ENCODE measurements at regions of chr4 and their contacts with region 1.

Region 1: DNA sequence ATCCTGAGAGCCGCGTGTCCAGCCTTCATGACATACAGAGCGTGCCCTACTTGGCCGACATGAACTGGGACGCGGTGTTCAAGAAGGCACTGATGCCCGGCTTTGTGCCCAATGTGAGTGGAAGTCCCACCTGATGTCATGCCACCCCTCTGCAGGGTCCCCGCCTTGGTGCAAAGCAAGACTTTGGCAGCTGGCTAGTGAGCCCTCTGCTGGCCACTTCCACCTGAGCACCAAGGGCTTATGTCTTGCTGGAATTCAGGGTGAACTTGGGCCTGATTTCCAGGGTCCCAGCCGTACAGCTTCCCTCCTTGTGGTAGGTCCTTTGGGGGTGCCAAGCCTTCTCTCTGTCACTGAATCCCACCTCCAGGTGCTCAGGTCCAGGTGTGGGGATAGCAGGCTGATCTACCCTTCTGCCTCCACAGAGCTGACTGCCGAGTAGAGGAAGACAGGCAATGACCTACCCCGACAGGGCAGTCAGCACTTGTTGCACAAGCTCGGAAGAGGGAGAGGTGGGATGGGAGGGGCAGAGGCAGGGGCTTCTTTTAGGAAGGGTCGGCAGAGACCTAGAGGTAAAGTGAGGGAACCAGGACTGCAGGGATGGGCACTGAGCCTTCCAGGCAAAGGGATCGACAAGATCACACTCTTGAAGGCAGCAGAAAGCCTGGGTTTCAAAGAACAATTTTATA is 248.1 kb downstream of the EVC2 start:
- DNase-seq: peak; percentile 38 to 43
- ATAC-seq: peak; percentile 67 to 89; a peak in 5 of 6 replicates
- H3K4me3 ChIP-seq: no peak overlapping the region
- H3K27ac ChIP-seq: 0 out of 6 replicates have a peak overlapping the region, but pooled peaks of 1 of the 2 experiments have one; percentile 21
- H3K4me1 ChIP-seq: no peaks in the 10 kb centered on the region
- CTCF ChIP-seq: peak; percentile 59
- EP300 ChIP-seq: no peak
- POLR2A ChIP-seq: no peak
- RAD21 ChIP-seq: peak; percentile 62 to 69

Region 2: GRCh38 chr4:5079581-5079980 is 380.7 kb before region 1 on chr4:
- CTCF ChIA-PET with region 1: no interaction called
- POLR2A ChIA-PET with region 1: no interaction called
- DNase-seq: no peak
- ATAC-seq: no peak
- H3K4me3 ChIP-seq: no peak overlapping the region
- H3K27ac ChIP-seq: no peak overlapping the region
- H3K4me1 ChIP-seq: no peaks in the 10 kb centered on the region
- CTCF ChIP-seq: no peak
- EP300 ChIP-seq: no peak
- POLR2A ChIP-seq: no peak
- RAD21 ChIP-seq: no peak

Region 3: DNA sequence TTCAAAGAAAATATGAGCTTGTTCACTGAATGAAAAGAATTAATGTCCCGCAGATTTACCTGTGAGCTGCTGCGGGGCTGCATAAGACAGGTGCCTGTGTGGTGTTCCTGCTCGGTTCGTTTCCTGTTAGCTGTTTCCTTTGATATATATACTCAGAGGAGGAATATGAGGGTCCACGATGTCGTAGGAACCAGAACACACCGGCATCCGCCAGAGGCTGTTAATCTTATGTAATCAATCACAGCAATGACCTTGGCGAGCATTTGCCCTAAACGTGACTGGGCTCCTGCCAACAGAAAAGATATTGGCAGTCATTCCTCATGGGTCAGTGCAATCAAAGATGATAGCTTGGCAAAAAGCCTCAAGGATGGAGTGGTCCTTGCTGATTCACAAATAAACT is 12.0 kb before region 1 on chr4:
- CTCF ChIA-PET with region 1: interaction called, 11 read pairs
- POLR2A ChIA-PET with region 1: no interaction called
- DNase-seq: no peak
- ATAC-seq: no peak
- H3K4me3 ChIP-seq: no peak overlapping the region
- H3K27ac ChIP-seq: no peak overlapping the region
- H3K4me1 ChIP-seq: no peaks in the 10 kb centered on the region
- CTCF ChIP-seq: no peak
- EP300 ChIP-seq: no peak
- POLR2A ChIP-seq: no peak
- RAD21 ChIP-seq: no peak

Region 4: DNA sequence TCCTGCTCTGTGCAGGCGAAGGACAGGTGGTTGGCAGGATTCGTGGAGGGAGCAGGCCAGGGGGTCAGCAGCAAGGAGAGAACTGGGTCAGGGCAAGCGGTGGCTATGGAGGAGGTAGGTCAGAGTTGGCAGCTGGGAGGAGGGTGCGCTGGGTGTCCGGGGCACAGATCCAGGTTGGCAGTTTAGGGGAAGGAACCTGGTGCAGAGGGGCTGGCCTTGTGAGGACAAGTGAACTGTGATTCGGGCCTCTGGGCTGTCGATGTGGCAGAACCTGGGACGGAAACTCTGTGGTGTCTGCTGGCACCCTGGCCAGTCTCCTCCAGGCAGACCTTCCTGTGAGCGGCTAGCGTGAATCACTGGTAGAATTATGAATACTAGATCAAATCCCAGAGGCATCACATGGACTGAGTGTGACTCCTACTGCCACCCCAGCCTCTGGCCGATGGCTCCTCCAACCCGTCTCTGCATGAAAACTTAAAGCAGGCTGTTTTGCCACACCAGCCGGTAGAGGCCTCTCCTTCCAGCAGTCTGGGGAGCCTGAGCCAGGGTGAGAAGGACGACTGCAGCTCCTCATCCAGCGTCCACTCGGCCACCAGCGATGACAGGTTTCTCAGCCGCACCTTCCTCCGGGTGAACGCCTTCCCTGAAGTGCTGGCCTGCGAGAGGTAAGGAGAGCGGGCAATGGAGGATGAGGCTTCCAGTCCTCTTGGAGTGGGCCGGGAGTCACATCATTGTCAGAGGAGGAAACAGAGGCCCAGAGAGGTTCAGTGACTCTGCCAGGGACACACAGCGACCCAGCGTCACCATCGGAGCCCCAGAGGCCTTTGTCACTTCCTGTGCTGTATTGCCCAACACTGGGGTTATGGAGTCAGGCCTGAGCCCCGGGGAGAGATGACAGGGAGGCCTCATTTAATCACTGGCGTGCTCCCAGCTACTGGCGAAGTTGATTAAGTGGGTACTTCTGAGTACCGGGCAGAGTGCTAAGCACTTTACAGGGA is 271.0 kb after region 1 on chr4:
- CTCF ChIA-PET with region 1: no interaction called
- POLR2A ChIA-PET with region 1: no interaction called
- DNase-seq: no peak
- ATAC-seq: no peak
- H3K4me3 ChIP-seq: no peak overlapping the region
- H3K27ac ChIP-seq: no peak overlapping the region
- H3K4me1 ChIP-seq: no peaks in the 10 kb centered on the region
- CTCF ChIP-seq: no peak
- EP300 ChIP-seq: no peak
- POLR2A ChIP-seq: no peak
- RAD21 ChIP-seq: no peak

Measured in A549 (cell line).